ENCODE measurements at regions of chr2 and their contacts with region 1.

Region 1: GRCh38 chr2:147045113-147045512 is 799.7 kb upstream of the ACVR2A start:
- DNase-seq: peak; percentile 79
- ATAC-seq: peak; percentile 68
- H3K4me3 ChIP-seq: no peak overlapping the region
- H3K27ac ChIP-seq: no peak overlapping the region
- H3K4me1 ChIP-seq: peaks cover 5% of the 10 kb centered on the region
- H3K27me3 ChIP-seq: no peaks in the 10 kb centered on the region
- CTCF ChIP-seq: peak; percentile 89

Region 2: DNA sequence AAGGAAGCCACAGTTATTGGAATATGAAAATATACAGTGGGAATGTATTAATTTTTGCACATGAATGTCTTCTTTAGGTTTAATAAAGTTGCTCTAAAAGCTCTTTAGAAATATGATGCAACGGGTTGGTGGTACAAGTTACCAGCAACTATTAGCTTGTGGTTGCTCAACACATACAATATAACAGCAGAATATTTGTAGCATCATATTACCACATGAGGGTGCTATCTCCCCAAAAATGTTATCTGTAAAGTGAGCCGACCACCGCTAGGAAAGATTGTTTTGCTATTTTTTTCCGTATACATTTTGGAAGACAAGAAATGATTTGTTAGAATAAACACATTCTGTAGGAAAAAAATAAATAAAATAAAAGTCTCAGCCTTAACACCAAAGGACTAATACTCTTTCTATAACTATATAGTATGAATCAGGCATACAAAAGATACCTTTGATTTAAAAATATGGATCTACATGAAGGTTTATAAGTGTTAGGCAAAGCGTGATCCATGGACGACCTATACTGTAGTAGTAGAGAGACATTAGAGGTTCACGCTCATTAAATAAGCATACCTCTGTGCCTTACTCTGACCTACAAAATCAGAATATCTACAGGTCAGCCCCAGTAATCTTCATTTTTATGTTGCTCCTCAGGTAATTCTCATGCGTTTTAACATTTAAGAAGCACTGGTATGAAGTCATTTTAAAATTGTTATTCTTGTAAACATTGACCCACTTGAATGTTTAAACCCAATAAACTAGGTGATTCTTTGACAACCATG is 310.9 kb before region 1 on chr2:
- CTCF ChIA-PET with region 1: no interaction called
- POLR2A ChIA-PET with region 1: no interaction called
- intact Hi-C with region 1: loop called (anchors 2 kb)
- DNase-seq: peak; percentile 84
- ATAC-seq: peak; percentile 87
- H3K4me3 ChIP-seq: peak overlapping the region; percentile 22; the same call in 1 of the 2 replicates
- H3K27ac ChIP-seq: no peak overlapping the region
- H3K4me1 ChIP-seq: peaks cover 4% of the 10 kb centered on the region; the same call in 1 of the 2 replicates
- H3K27me3 ChIP-seq: no peaks in the 10 kb centered on the region
- CTCF ChIP-seq: peak; percentile 86

Measured in PC-3 (cell line).